ENCODE measurements at regions of chrX and their contacts with region 1.

Region 1: DNA sequence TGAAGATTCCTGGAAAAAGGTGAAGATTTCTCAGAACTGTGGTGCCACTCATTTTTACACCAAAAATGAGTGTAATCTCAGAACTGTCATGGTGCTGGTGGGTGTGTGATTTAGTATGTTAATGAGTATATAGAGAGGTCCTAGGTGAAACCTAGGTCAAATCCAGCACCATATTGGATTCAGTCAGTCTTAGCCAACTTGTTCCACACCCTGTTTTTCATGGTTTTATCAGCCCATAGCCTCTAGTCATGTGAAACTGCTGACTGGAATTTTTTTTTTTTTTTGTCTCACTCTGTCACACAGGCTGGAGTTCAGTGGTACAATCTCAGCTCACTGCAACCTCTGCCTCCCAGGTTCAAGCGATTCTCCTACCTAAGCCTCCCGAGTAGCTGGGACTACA is 58.0 kb downstream of the LAS1L start:
- DNase-seq: no peak

Region 2: GRCh38 chrX:64536736-64537135 is 939.8 kb before region 1 on chrX:
- intact Hi-C with region 1: loop called in 1 of 2 experiments (anchors 10 kb)
- DNase-seq: no peak

Measured in posterior vena cava (tissue), 2 donors.